CD14-positive monocyte (primary cell): ENCODE measurements at regions of chr22 and their contacts with region 1.

Region 1: DNA sequence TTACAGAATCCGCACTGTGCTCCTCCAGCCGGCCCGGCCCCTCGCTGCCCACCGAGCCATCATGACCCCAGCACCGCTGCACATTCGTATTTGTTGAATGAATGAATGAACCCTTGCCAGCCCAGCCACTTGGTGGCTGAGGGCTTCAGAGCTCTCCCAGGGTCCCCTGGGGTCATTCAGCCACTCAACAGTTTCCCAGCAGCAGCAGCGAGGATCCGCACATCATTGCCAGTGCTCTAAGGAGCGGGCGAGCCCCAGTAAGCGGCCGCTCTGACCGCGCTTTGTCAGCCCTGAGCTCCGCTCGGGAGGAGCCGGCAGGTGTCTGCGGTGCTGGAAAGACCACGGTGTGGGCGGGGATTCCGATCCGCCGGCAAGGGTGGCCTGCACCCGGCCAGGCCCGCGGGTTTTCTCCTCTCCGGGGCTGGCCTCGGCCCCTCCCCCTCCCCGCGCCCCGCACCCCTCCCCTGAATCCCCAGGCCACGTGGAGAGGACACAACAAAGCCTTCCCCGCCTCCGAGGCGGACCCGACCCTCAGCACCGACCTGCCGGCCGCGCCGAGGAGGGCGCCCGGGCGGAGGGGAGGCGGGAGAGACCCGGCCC is 563 bp downstream of the BID start:
- DNase-seq: peak in 2 of 3 donors; percentile 15 to 29
- H3K4me3 ChIP-seq: peak overlapping the region; percentile 91 to 95 (median 93)
- H3K4me3 Mint-ChIP-seq: peak overlapping the region; percentile 98 to 100
- H3K27ac ChIP-seq: peak overlapping the region; percentile 93 to 99
- H3K27ac Mint-ChIP-seq: peak overlapping the region; percentile 93 to 99 (median 99)
- H3K4me1 ChIP-seq: peaks cover 78 to 84% of the 10 kb centered on the region in 2 donors
- H3K4me1 Mint-ChIP-seq: peaks cover 72% of the 10 kb centered on the region
- H3K27me3 ChIP-seq: no peaks in the 10 kb centered on the region
- H3K27me3 Mint-ChIP-seq: no peaks in the 10 kb centered on the region
- CTCF ChIP-seq: no peak

Region 2: DNA sequence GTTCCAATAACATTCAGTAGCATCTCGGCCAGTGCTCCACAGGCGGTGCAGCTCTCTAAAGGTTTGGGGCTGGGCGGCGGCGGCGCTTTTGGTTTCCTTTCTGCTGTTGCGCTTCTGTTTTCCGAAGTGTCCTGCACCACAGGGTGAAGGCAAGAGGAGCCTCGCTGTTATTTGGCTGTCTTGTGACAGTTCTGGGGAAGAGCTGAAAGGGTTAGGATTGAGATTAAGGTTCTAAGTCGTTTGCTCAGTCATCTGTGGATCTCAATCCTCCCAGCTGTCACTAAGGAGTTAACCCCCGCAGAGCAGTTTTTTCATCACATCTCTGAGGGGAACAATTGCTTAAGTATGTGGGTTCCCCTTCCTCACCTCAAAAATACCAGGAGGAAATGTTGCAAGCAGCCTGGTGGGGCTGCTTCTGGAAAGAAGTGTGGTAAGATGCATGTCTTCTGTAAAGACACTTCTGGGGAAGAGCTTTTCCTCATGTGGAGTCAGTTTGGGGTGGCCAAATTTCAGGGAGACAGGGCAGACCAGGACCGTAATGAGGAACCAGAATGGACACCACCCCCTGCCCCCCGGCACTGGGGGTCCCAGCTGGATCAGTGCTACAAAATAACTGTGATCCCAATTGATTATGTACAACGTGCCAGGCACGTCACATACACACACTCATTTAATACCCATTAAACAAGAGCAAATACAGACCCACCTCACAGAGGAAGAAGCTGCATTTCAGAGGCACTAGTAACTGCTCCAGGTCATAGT is 666.7 kb before region 1 on chr22:
- intact Hi-C with region 1: loop called in 1 of 2 experiments (anchors 10 kb)
- DNase-seq: peak; percentile 81 to 92 (median 91)
- H3K4me3 ChIP-seq: peak overlapping the region; percentile 1 to 65 (median 11)
- H3K4me3 Mint-ChIP-seq: peak overlapping the region; percentile 72 to 83
- H3K27ac ChIP-seq: peak overlapping the region; percentile 75 to 85
- H3K27ac Mint-ChIP-seq: peak overlapping the region; percentile 93 to 98 (median 96)
- H3K4me1 ChIP-seq: peaks cover 99 to 100% of the 10 kb centered on the region in 2 donors
- H3K4me1 Mint-ChIP-seq: peaks cover 85% of the 10 kb centered on the region
- H3K27me3 ChIP-seq: no peaks in the 10 kb centered on the region
- H3K27me3 Mint-ChIP-seq: peaks cover 0 to 2% (median 0%) of the 10 kb centered on the region in 3 donors
- CTCF ChIP-seq: no peak

Region 3: DNA sequence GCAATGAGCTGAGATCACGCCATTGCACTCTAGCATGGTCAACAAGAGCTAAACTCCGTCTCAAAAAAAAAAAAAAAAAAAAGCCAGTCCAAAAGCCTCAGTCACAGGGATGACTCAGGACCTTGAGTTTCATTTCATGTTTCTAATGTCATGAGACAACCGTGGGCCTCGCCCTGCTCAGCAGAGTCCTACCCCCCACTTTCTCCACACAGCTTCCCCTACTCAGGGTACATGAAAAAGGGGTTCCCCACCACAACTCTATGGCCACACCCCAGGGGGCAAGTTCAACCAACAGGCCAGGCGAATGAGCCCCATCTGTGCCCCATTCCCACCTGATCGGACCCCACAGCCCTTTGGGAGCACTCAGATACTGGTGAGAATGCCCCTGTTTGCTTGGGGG is 530.2 kb before region 1 on chr22:
- intact Hi-C with region 1: loop called in 1 of 2 experiments (anchors 10 kb)
- DNase-seq: peak; percentile 96 to 98 (median 98)
- H3K4me3 ChIP-seq: peak overlapping the region in 1 of 3 experiments; percentile 19
- H3K4me3 Mint-ChIP-seq: peak overlapping the region in 1 of 2 donors; percentile 75
- H3K27ac ChIP-seq: peak overlapping the region; percentile 99 to 100
- H3K27ac Mint-ChIP-seq: peak overlapping the region; percentile 99 to 100 (median 100)
- H3K4me1 ChIP-seq: peaks cover 50 to 57% of the 10 kb centered on the region in 2 donors
- H3K4me1 Mint-ChIP-seq: peaks cover 56% of the 10 kb centered on the region
- H3K27me3 ChIP-seq: no peaks in the 10 kb centered on the region
- H3K27me3 Mint-ChIP-seq: peaks cover 0 to 6% (median 0%) of the 10 kb centered on the region in 3 donors
- CTCF ChIP-seq: no peak

Region 4: GRCh38 chr22:17628304-17629166 is 145.2 kb before region 1 on chr22 and contains the start of gene ATP6V1E1:
- intact Hi-C with region 1: loop called in 1 of 2 experiments (anchors 2 kb)
- DNase-seq: peak; percentile 95 to 99 (median 98)
- H3K4me3 ChIP-seq: peak within 1 kb of the TSS; percentile 67 to 95 (median 94)
- H3K4me3 Mint-ChIP-seq: peak within 1 kb of the TSS; percentile 90 to 96
- H3K27ac ChIP-seq: peak within 1 kb of the TSS; percentile 93 to 98
- H3K27ac Mint-ChIP-seq: peak within 1 kb of the TSS; percentile 97 to 99 (median 98)
- H3K4me1 ChIP-seq: peaks cover 29 to 30% of the 10 kb centered on the region in 2 donors
- H3K4me1 Mint-ChIP-seq: peaks cover 28% of the 10 kb centered on the region
- H3K27me3 ChIP-seq: no peaks in the 10 kb centered on the region
- H3K27me3 Mint-ChIP-seq: no peaks in the 10 kb centered on the region
- CTCF ChIP-seq: no peak
- polyA plus RNA-seq, gene ATP6V1E1: 114 to 147 (median 144) TPM

Region 5: DNA sequence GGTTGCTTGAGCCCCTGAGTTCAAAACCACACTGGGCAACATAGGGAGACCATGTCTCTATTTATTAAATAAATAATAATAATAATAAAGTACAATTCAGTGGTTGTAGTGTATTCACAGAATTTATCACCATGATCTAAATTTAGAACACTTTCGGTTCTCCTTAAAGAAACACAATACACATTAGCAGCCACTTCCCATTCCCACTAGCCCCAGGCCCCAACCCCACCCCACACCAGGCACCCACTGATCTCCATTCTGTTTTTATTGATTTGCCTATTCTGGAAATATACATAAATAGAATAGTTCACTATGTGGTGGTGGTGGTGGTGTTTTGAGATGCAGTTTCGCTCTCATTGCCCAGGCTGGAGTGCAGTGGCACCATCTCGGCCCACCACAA is 89.5 kb before region 1 on chr22:
- intact Hi-C with region 1: loop called in 1 of 2 experiments (anchors 5 kb)
- DNase-seq: peak in 2 of 3 donors; percentile 50 to 66
- H3K4me3 ChIP-seq: peak overlapping the region in 2 of 3 experiments; percentile 18 to 38
- H3K4me3 Mint-ChIP-seq: peak overlapping the region; percentile 49 to 55
- H3K27ac ChIP-seq: peak overlapping the region; percentile 56 to 66
- H3K27ac Mint-ChIP-seq: peak overlapping the region; percentile 81 to 92 (median 89)
- H3K4me1 ChIP-seq: peaks cover 36 to 46% of the 10 kb centered on the region in 2 donors
- H3K4me1 Mint-ChIP-seq: peaks cover 34% of the 10 kb centered on the region
- H3K27me3 ChIP-seq: no peaks in the 10 kb centered on the region
- H3K27me3 Mint-ChIP-seq: no peaks in the 10 kb centered on the region
- CTCF ChIP-seq: no peak

Region 6: DNA sequence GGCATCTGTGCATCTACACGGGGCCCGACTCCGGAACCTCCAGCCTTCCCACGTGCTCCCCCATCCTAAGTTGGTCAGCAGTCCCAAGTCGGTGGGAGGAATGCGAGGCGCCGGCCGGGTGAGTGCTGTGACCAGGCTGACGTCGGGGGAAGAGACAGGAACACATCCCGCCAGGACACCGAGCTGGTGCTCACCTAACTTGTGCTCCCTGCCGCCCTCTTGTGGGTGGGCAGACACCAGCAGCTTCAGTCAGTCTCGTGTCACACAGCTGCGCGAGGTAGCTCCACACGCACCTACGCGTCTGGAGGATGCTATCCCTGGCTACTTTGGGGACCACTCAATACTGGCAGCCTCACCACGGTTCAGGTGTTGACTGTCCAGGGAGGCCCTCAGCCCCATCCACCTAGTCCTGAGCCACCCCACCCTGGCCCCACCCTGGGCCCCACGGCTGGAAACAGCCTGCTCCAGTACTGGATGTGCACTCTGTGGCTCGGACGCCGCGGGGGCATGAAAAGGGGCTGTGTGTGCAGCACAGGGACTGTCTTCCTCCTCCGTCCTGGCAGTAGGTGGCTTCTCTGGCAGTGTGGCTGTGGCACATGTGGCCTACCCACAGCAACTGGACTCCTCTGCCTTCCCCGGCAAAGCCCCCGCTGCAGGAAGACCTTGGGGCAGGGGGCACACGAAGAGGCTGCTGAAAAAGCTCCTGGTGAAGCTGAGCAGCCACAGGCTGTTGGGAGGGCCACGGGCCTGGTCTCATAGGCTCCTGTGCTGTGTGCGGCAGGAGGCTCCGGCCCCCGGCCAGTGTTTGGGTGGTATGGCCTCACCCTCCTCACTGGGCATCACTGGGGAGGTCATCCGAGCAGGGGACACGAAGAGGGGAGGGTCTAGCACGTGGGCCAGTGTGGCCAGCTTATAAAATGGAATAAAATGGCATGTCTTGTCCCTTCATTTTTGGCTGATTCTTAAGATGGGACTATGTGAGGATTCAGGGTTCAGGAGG is 11.8 kb after region 1 on chr22:
- intact Hi-C with region 1: loop called in 1 of 2 experiments (anchors 1 kb)
- DNase-seq: peak; percentile 60 to 73 (median 70)
- H3K4me3 ChIP-seq: no peak overlapping the region
- H3K4me3 Mint-ChIP-seq: no peak overlapping the region
- H3K27ac ChIP-seq: peak overlapping the region in 1 of 2 donors; percentile 58
- H3K27ac Mint-ChIP-seq: peak overlapping the region in 5 of 7 donors; percentile 42 to 85 (median 43)
- H3K4me1 ChIP-seq: peaks cover 27 to 49% of the 10 kb centered on the region in 2 donors
- H3K4me1 Mint-ChIP-seq: peaks cover 33% of the 10 kb centered on the region
- H3K27me3 ChIP-seq: no peaks in the 10 kb centered on the region
- H3K27me3 Mint-ChIP-seq: peaks cover 0 to 2% (median 0%) of the 10 kb centered on the region in 3 donors
- CTCF ChIP-seq: peak; percentile 81

Region 7: DNA sequence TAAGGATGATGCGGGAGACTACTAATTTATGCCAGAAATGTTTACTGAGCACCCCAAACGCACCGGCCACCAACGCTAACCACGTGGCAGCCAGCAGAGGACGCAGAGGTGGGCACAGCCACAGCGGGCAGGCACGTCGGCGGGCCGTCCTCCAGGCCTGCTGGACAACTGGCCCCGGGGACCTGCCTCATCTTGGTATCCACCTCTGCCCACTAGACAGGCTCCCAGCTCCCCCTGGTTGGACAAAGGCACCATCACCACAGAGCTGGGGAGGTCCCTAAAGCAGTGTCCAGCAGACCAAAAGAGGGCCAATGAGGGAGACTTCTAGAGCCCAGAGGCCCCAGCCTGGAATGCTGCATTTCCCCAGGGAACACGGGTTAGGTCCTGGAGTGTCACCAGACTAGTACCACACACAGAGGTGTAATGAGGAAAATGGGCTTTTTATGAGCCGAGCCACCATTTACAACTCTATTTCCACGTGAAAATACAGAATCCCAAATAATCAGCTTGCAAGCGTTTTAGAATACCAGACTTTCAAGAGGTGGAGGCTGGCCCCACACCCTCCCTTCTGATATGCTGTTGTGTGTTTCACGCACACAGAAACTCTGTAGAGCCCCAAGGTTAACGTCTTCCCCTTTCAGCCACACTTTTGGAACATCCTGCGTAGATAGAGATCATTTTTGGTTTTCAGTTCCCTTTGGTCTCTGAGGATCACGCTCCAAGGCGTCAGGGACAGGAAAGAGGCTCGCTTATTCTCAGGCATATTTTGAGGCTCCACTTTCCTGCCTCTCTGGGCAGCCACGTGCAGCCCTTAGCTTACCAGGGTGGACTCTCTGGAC is 24.2 kb after region 1 on chr22:
- intact Hi-C with region 1: no loop called
- DNase-seq: peak; percentile 53 to 75 (median 68)
- H3K4me3 ChIP-seq: no peak overlapping the region
- H3K4me3 Mint-ChIP-seq: no peak overlapping the region
- H3K27ac ChIP-seq: peak overlapping the region; percentile 16 to 59
- H3K27ac Mint-ChIP-seq: peak overlapping the region in 5 of 7 donors; percentile 7 to 75 (median 28)
- H3K4me1 ChIP-seq: peaks cover 19 to 24% of the 10 kb centered on the region in 2 donors
- H3K4me1 Mint-ChIP-seq: peaks cover 28% of the 10 kb centered on the region
- H3K27me3 ChIP-seq: no peaks in the 10 kb centered on the region
- H3K27me3 Mint-ChIP-seq: peaks cover 0 to 1% (median 1%) of the 10 kb centered on the region in 3 donors
- CTCF ChIP-seq: no peak

Region 8: DNA sequence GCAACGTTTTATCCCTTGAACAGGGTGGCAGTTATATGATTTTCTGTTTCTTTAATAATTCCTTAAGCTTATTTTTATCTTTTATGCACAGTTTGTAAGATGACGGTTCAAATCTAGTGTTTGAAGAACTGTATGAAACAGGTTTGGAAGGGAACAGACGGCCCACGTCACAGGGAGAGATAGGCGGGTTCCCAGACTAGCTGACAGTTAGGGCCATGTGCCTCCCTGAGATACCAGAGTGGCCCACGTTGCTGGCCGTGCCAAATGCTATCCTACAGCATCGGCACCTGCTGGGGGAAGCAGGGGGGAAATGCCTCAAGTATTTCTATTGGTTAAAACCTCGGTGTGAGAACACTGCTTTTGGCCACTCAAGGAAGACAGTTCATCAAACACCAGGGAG is 50.8 kb after region 1 on chr22:
- intact Hi-C with region 1: no loop called
- DNase-seq: no peak
- H3K4me3 ChIP-seq: no peak overlapping the region
- H3K4me3 Mint-ChIP-seq: no peak overlapping the region
- H3K27ac ChIP-seq: no peak overlapping the region
- H3K27ac Mint-ChIP-seq: no peak overlapping the region
- H3K4me1 ChIP-seq: no peaks in the 10 kb centered on the region
- H3K4me1 Mint-ChIP-seq: no peaks in the 10 kb centered on the region
- H3K27me3 ChIP-seq: no peaks in the 10 kb centered on the region
- H3K27me3 Mint-ChIP-seq: peaks cover 0 to 2% (median 0%) of the 10 kb centered on the region in 3 donors
- CTCF ChIP-seq: no peak